T-cell (primary cell): ENCODE measurements at regions of chr2 and their contacts with region 1.

Region 1: DNA sequence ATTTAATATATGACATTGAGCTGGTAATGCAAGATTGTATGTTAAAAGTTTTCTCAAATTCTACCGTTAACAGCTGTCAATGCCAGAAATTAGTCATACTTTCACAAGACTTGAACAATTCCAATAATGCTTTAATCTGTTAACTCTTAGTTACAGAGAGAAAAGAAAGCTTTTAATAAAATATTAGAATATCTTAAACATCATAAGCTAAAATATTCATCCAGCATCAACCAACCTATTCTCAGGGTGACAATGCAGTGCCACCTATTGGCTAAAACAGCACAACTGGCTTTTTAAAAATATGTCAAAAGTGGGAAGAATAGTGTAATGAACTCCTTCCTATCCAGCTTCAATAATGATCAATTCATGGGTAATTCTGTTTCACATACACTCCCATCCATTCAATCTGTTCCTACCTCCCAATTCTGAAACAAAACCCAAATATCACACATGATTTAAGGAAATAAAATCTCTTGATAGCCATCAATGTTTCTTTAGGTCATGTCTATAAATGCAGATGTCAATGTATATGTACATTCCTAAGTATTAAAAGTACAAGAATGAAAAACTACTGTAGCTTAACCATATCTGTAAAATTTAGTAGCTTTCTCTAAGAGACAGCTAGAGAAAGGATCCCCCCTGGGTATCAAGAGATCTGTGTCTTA is 79.8 kb upstream of the CCDC141 start:
- DNase-seq: peak in 12 of 35 experiments; percentile 2 to 51 (median 5)
- ATAC-seq: no peak
- H3K4me3 ChIP-seq: no peak overlapping the region
- H3K4me3 Mint-ChIP-seq: no peak overlapping the region
- H3K27ac ChIP-seq: no peak overlapping the region
- H3K27ac Mint-ChIP-seq: no peak overlapping the region
- H3K4me1 ChIP-seq: no peaks in the 10 kb centered on the region
- H3K4me1 Mint-ChIP-seq: no peaks in the 10 kb centered on the region
- H3K27me3 ChIP-seq: no peaks in the 10 kb centered on the region
- H3K27me3 Mint-ChIP-seq: no peaks in the 10 kb centered on the region

Region 2: DNA sequence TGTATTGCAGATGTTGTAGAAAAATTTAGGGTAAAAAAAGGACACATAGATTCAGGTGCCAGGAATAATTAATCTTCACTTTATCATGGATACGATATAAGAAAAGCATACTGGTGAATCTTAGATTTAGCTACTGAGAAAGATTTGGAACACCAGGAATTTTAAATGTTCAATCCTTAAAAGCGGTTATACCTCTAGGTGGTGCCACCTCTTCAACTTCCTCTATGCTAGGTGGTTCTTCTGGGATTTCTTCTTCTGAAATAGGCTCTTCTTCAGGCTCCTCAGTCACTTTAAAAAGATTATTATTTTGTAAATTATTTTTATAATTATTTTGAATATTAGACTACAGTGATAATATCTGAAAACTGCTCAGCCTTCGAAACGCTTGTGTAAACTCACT is 455.6 kb before region 1 on chr2:
- CTCF ChIA-PET with region 1: no interaction called
- POLR2A ChIA-PET with region 1: no interaction called
- DNase-seq: no peak
- ATAC-seq: no peak
- H3K4me3 ChIP-seq: no peak overlapping the region
- H3K4me3 Mint-ChIP-seq: no peak overlapping the region
- H3K27ac ChIP-seq: no peak overlapping the region
- H3K27ac Mint-ChIP-seq: no peak overlapping the region
- H3K4me1 ChIP-seq: no peaks in the 10 kb centered on the region
- H3K4me1 Mint-ChIP-seq: peaks cover 4 to 8% (median 5%) of the 10 kb centered on the region in 3 donors
- H3K27me3 ChIP-seq: no peaks in the 10 kb centered on the region
- H3K27me3 Mint-ChIP-seq: no peaks in the 10 kb centered on the region

Region 3: GRCh38 chr2:178796079-178796677 is 333.5 kb before region 1 on chr2:
- CTCF ChIA-PET with region 1: interaction called, 13 read pairs
- POLR2A ChIA-PET with region 1: no interaction called
- DNase-seq: peak in 1 of 35 experiments; percentile 49
- ATAC-seq: no peak
- H3K4me3 ChIP-seq: no peak overlapping the region
- H3K4me3 Mint-ChIP-seq: no peak overlapping the region
- H3K27ac ChIP-seq: no peak overlapping the region
- H3K27ac Mint-ChIP-seq: no peak overlapping the region
- H3K4me1 ChIP-seq: no peaks in the 10 kb centered on the region
- H3K4me1 Mint-ChIP-seq: no peaks in the 10 kb centered on the region
- H3K27me3 ChIP-seq: no peaks in the 10 kb centered on the region
- H3K27me3 Mint-ChIP-seq: no peaks in the 10 kb centered on the region

Region 4: GRCh38 chr2:178891265-178891958 is 238.3 kb before region 1 on chr2:
- CTCF ChIA-PET with region 1: interaction called, 17 to 30 read pairs
- POLR2A ChIA-PET with region 1: no interaction called
- DNase-seq: peak in 34 of 35 experiments; percentile 2 to 74 (median 33)
- ATAC-seq: peak; percentile 37 to 67 (median 59)
- H3K4me3 ChIP-seq: no peak overlapping the region
- H3K4me3 Mint-ChIP-seq: no peak overlapping the region
- H3K27ac ChIP-seq: no peak overlapping the region
- H3K27ac Mint-ChIP-seq: no peak overlapping the region
- H3K4me1 ChIP-seq: peaks cover 0 to 2% of the 10 kb centered on the region in 2 experiments
- H3K4me1 Mint-ChIP-seq: peaks cover 0 to 8% (median 8%) of the 10 kb centered on the region in 3 donors
- H3K27me3 ChIP-seq: no peaks in the 10 kb centered on the region
- H3K27me3 Mint-ChIP-seq: no peaks in the 10 kb centered on the region

Region 5: GRCh38 chr2:179059026-179059700 is 70.5 kb before region 1 on chr2:
- CTCF ChIA-PET with region 1: no interaction called
- POLR2A ChIA-PET with region 1: no interaction called
- DNase-seq: no peak
- ATAC-seq: no peak
- H3K4me3 ChIP-seq: no peak overlapping the region
- H3K4me3 Mint-ChIP-seq: no peak overlapping the region
- H3K27ac ChIP-seq: no peak overlapping the region
- H3K27ac Mint-ChIP-seq: no peak overlapping the region
- H3K4me1 ChIP-seq: no peaks in the 10 kb centered on the region
- H3K4me1 Mint-ChIP-seq: peaks cover 0 to 2% (median 0%) of the 10 kb centered on the region in 3 donors
- H3K27me3 ChIP-seq: no peaks in the 10 kb centered on the region
- H3K27me3 Mint-ChIP-seq: no peaks in the 10 kb centered on the region

Region 6: GRCh38 chr2:179096090-179096489 is 33.6 kb before region 1 on chr2:
- CTCF ChIA-PET with region 1: interaction called in 1 of 2 experiments, 10 read pairs
- POLR2A ChIA-PET with region 1: no interaction called
- DNase-seq: peak in 18 of 35 experiments; percentile 4 to 38 (median 10)
- ATAC-seq: peak; percentile 77 to 97 (median 93)
- H3K4me3 ChIP-seq: no peak overlapping the region
- H3K4me3 Mint-ChIP-seq: peak overlapping the region in 1 of 3 donors; percentile 38
- H3K27ac ChIP-seq: no peak overlapping the region
- H3K27ac Mint-ChIP-seq: no peak overlapping the region
- H3K4me1 ChIP-seq: peaks cover 7 to 11% of the 10 kb centered on the region in 2 experiments
- H3K4me1 Mint-ChIP-seq: peaks cover 16 to 22% (median 21%) of the 10 kb centered on the region in 3 donors
- H3K27me3 ChIP-seq: no peaks in the 10 kb centered on the region
- H3K27me3 Mint-ChIP-seq: no peaks in the 10 kb centered on the region

Region 7: DNA sequence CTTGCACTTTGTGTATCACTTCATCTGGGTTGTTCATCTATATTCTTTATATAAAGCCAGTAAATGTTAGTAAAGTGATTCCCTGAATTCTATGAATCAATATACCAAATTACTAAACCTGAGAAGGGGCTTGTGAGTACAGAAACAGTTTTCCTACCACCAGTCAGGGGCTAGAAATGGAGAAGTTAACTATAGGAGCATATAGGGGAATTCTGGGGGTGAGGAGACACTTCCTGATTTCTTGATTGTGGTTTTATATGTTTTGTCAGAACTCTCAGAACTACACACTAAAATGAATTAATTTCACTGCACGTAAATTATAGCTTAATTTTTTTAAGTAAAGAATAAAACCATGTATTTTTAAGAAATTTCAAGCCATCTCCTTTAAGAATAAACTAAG is 41.2 kb after region 1 on chr2:
- CTCF ChIA-PET with region 1: no interaction called
- POLR2A ChIA-PET with region 1: no interaction called
- DNase-seq: no peak
- ATAC-seq: no peak
- H3K4me3 ChIP-seq: no peak overlapping the region
- H3K4me3 Mint-ChIP-seq: no peak overlapping the region
- H3K27ac ChIP-seq: no peak overlapping the region
- H3K27ac Mint-ChIP-seq: no peak overlapping the region
- H3K4me1 ChIP-seq: no peaks in the 10 kb centered on the region
- H3K4me1 Mint-ChIP-seq: peaks cover 0 to 2% (median 0%) of the 10 kb centered on the region in 3 donors
- H3K27me3 ChIP-seq: no peaks in the 10 kb centered on the region
- H3K27me3 Mint-ChIP-seq: no peaks in the 10 kb centered on the region

Region 8: DNA sequence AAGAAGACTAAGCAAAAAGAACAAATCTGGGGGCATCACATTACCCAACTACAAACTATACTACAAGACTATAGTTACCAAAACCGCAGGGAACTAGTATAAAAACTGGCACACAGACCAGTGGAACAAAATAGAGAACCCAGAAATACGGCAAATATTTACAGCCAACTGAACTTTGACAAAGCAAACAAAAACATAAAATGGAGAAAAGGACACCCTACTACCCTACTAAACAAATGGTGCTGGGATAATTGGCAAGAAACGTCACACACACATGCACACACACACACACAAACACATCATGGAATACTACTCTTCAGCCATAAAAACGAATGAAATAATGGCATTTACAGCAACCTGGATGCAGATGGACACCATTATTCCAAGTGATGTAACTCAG is 81.6 kb after region 1 on chr2:
- CTCF ChIA-PET with region 1: no interaction called
- POLR2A ChIA-PET with region 1: no interaction called
- DNase-seq: no peak
- ATAC-seq: no peak
- H3K4me3 ChIP-seq: no peak overlapping the region
- H3K4me3 Mint-ChIP-seq: no peak overlapping the region
- H3K27ac ChIP-seq: no peak overlapping the region
- H3K27ac Mint-ChIP-seq: no peak overlapping the region
- H3K4me1 ChIP-seq: no peaks in the 10 kb centered on the region
- H3K4me1 Mint-ChIP-seq: no peaks in the 10 kb centered on the region
- H3K27me3 ChIP-seq: peaks cover 0 to 6% of the 10 kb centered on the region in 2 experiments
- H3K27me3 Mint-ChIP-seq: peaks cover 0 to 3% of the 10 kb centered on the region in 2 donors